ENCODE measurements at regions of chr4 and their contacts with region 1.

Region 1: GRCh38 chr4:101187841-101188240 is 159.5 kb downstream of the PPP3CA start:
- DNase-seq: no peak
- CTCF ChIP-seq: no peak

Region 2: GRCh38 chr4:101175896-101176676 is 11.8 kb before region 1 on chr4:
- CTCF ChIA-PET with region 1: interaction called, 35 read pairs
- POLR2A ChIA-PET with region 1: no interaction called
- DNase-seq: no peak
- CTCF ChIP-seq: no peak